Colonic mucosa (tissue), 4 donors: ENCODE measurements at regions of chr5 and their contacts with region 1.

Region 1: GRCh38 chr5:112419986-112420864 is 1.1 kb upstream of the EPB41L4A start:
- DNase-seq: peak; percentile 86
- H3K4me3 ChIP-seq: peak overlapping the region; percentile 66
- H3K27ac ChIP-seq: peak overlapping the region; percentile 74
- H3K4me1 ChIP-seq: no peaks in the 10 kb centered on the region
- H3K27me3 ChIP-seq: no peaks in the 10 kb centered on the region
- CTCF ChIP-seq: peak; percentile 78

Region 2: GRCh38 chr5:112125903-112126302 is 294.3 kb before region 1 on chr5:
- intact Hi-C with region 1: no loop called
- DNase-seq: no peak
- H3K4me3 ChIP-seq: no peak overlapping the region
- H3K27ac ChIP-seq: no peak overlapping the region
- H3K4me1 ChIP-seq: no peaks in the 10 kb centered on the region
- H3K27me3 ChIP-seq: no peaks in the 10 kb centered on the region
- CTCF ChIP-seq: no peak

Region 3: GRCh38 chr5:112208699-112209615 is 211.3 kb before region 1 on chr5:
- intact Hi-C with region 1: loop called (anchors 2 kb)
- DNase-seq: no peak
- H3K4me3 ChIP-seq: no peak overlapping the region
- H3K27ac ChIP-seq: no peak overlapping the region
- H3K4me1 ChIP-seq: no peaks in the 10 kb centered on the region
- H3K27me3 ChIP-seq: no peaks in the 10 kb centered on the region
- CTCF ChIP-seq: no peak